ENCODE measurements at regions of chr19 and their contacts with region 1.

Region 1: GRCh38 chr19:55117636-55118391 is at the start of gene PPP1R12C:
- DNase-seq: peak; percentile 100
- H3K4me3 ChIP-seq: peak within 1 kb of the TSS; percentile 76 to 96 (median 86)
- H3K27ac ChIP-seq: peak within 1 kb of the TSS; percentile 95 to 99 (median 98)
- H3K4me1 ChIP-seq: peaks cover 0 to 48% (median 40%) of the 10 kb centered on the region in 4 donors
- H3K27me3 ChIP-seq: no peaks in the 10 kb centered on the region
- CTCF ChIP-seq: no peak
- EP300 ChIP-seq: peak in 1 of 4 donors; percentile 90
- POLR2A ChIP-seq: no peak
- total RNA-seq, gene PPP1R12C: 125 to 222 (median 168) TPM

Region 2: GRCh38 chr19:53867225-53868090 is 1250.4 kb before region 1 on chr19 and contains the start of gene MYADM:
- intact Hi-C with region 1: loop called (anchors 5 kb)
- DNase-seq: peak; percentile 100
- H3K4me3 ChIP-seq: peak within 1 kb of the TSS; percentile 79 to 94 (median 92)
- H3K27ac ChIP-seq: peak within 1 kb of the TSS; percentile 94 to 98 (median 96)
- H3K4me1 ChIP-seq: peaks cover 0 to 51% (median 45%) of the 10 kb centered on the region in 4 donors
- H3K27me3 ChIP-seq: no peaks in the 10 kb centered on the region
- CTCF ChIP-seq: no peak
- EP300 ChIP-seq: peak in 2 of 4 donors; percentile 39 to 69
- POLR2A ChIP-seq: peak; percentile 86 to 96
- total RNA-seq, gene MYADM: 65.5 to 189 (median 97.3) TPM

Region 3: DNA sequence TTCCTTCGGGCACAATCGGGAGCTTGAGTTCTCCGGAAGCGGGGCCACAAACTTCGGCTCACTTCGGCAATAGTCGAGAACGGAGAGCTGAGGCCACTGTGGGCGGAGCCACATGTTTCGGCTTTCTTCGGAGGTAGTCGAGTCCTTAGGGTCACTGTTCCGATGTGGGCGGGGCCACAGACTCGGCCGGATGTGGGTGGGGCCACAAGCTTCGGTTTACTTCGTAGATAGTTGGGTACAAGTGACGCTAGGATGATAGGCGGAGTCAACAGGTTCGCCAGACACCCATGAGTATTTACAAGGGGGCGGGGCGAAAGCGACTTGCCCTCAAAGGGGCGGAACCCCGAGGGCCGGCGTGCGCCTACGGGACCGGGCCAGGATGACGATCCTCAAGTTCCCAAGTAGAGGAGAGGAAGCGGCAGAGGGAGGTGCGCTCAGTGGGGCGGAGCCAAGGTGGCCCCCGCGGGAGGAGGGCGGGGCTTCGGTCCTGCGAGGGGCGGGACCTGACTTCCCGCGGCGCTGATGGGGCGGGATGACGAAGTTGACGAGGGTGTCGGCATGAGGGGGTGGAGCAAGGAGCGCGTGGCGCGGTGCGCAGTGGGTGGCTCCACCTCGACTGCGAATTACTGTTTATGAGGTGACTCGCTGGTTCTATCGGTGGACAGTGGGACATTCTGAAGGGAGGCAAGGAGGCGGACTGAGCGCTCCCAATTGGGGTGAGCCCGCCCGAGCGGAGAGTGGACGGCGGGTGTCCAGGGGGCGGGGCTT is 927.9 kb before region 1 on chr19:
- intact Hi-C with region 1: loop called (anchors 10 kb)
- DNase-seq: peak; percentile 100
- H3K4me3 ChIP-seq: peak overlapping the region; percentile 62 to 95 (median 88)
- H3K27ac ChIP-seq: peak overlapping the region; percentile 94 to 99 (median 98)
- H3K4me1 ChIP-seq: peaks cover 0 to 28% (median 26%) of the 10 kb centered on the region in 4 donors
- H3K27me3 ChIP-seq: no peaks in the 10 kb centered on the region
- CTCF ChIP-seq: no peak
- EP300 ChIP-seq: peak in 1 of 4 donors; percentile 7
- POLR2A ChIP-seq: peak; percentile 41 to 49

Region 4: GRCh38 chr19:54463531-54464043 is 654.2 kb before region 1 on chr19 and contains the start of gene LENG9:
- intact Hi-C with region 1: loop called (anchors 10 kb)
- DNase-seq: peak; percentile 99
- H3K4me3 ChIP-seq: peak within 1 kb of the TSS; percentile 42 to 63 (median 60)
- H3K27ac ChIP-seq: peak within 1 kb of the TSS; percentile 89 to 94 (median 91)
- H3K4me1 ChIP-seq: peaks cover 0 to 48% (median 40%) of the 10 kb centered on the region in 4 donors
- H3K27me3 ChIP-seq: no peaks in the 10 kb centered on the region
- CTCF ChIP-seq: no peak
- EP300 ChIP-seq: no peak
- POLR2A ChIP-seq: peak; percentile 58 to 87
- total RNA-seq, gene LENG9: 2.5 to 7.8 (median 3.6) TPM

Region 5: DNA sequence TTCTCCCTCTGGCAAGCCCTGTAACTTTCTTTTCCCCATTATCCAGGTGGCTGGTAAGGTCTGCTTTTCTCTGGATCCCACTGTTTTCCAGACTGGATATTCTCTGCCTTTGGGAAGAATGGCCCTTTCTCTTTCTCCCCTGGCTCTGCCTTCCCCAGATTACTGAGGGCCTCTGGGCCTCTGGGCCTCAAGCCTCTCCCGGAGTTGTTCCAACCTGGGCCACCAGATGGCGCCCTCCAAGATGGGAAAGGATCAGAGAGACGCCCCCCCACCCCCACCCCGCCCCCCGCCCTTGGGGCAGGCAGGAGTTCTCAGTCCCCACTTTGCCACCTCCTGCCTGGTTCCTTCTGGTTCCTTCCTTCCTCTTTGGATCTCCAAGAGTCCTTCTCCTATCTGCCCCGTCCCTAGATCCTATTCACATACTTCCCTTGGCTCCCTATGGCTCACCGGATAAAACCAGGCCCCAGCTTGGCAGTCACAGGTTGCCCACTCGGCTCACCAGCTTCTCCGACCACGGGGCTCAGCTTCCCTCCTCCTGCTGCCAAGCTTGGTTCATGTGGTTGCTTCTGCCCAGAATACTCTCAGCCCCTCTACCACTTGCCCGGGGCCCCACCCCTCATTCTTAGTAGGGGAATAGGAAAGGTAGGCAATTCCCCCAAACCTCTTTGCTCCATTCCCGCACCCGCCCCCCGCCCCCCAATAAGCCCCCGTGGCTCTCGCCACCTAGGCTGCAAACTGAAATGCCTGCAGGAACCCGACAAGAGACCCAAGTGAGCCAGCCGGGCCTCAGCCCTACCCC is 29.1 kb before region 1 on chr19:
- intact Hi-C with region 1: loop called (anchors 2 kb)
- DNase-seq: peak; percentile 86
- H3K4me3 ChIP-seq: no peak overlapping the region
- H3K27ac ChIP-seq: peak overlapping the region in 3 of 4 donors; percentile 40 to 55 (median 47)
- H3K4me1 ChIP-seq: peaks cover 0 to 37% (median 26%) of the 10 kb centered on the region in 4 donors
- H3K27me3 ChIP-seq: peaks cover 15 to 32% (median 29%) of the 10 kb centered on the region in 3 donors
- CTCF ChIP-seq: peak in 3 of 4 experiments; percentile 43 to 92 (median 45)
- EP300 ChIP-seq: no peak
- POLR2A ChIP-seq: no peak

Region 6: GRCh38 chr19:55653758-55654539 is 536.1 kb after region 1 on chr19:
- intact Hi-C with region 1: loop called (anchors 10 kb)
- DNase-seq: peak; percentile 100
- H3K4me3 ChIP-seq: peak overlapping the region; percentile 86 to 97 (median 94)
- H3K27ac ChIP-seq: peak overlapping the region; percentile 98 to 100 (median 99)
- H3K4me1 ChIP-seq: peaks cover 0 to 56% (median 52%) of the 10 kb centered on the region in 4 donors
- H3K27me3 ChIP-seq: no peaks in the 10 kb centered on the region
- CTCF ChIP-seq: peak; percentile 92 to 100 (median 100)
- EP300 ChIP-seq: peak in 1 of 4 donors; percentile 20
- POLR2A ChIP-seq: peak; percentile 83 to 92

Measured in sigmoid colon (tissue), 7 donors.